ENCODE measurements at regions of chr6 and their contacts with region 1.

Region 1: DNA sequence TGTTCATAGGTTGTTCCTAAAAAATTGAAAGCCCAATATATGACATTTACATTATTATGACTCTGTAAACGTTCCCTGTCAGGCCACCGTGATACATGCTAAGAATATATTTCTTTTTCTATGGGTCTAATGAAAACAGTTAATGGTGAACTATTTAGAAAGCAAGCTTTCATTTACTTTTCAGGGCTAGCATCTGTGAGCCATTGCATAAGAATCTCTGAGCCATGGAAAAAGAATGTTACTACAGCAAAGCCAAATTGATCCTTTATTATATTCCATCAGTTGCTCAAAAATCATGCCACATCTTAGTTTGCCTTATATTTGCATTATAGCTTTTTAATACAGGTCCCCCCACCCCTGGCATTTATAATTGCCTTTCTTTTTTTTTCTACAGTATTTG is 275.5 kb downstream of the ZFAND3 start:
- DNase-seq: peak in 1 of 2 experiments; percentile 44
- H3K4me3 ChIP-seq: no peak overlapping the region
- H3K27ac ChIP-seq: 0 out of 2 replicates have a peak overlapping the region, but pooled peaks have one; percentile 2
- H3K4me1 ChIP-seq: no peaks in the 10 kb centered on the region
- H3K27me3 ChIP-seq: no peaks in the 10 kb centered on the region
- CTCF ChIP-seq: no peak

Region 2: DNA sequence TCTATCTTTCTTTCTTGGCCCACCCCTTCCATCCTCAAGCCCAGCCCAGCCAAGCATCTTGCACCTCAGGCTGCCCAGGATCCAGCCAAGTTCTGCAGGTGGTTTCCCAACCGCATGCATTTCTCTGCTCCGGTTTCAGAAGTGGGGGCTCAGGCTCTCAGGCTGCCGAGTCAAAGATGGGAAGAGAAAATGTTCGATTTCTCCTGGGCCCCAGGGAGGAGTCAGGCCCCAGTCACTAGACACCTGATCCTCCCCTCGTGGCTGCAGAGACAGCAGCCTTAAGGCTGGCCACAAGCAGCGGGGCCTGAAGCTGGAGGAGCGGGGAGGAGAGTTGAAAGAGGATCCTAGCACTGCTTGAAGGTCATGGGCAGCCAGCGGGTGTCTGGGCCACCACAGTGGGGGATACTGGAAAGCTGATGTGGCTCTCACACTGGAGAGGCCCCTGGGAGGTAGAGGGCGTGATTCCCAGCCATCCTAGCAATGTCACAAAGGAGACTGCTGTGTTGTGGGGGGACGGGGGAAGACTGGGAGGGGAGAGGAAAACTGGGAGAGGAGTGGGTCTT is 317.7 kb before region 1 on chr6:
- CTCF ChIA-PET with region 1: no interaction called
- POLR2A ChIA-PET with region 1: no interaction called
- intact Hi-C with region 1: no loop called
- DNase-seq: no peak
- H3K4me3 ChIP-seq: no peak overlapping the region
- H3K27ac ChIP-seq: no peak overlapping the region
- H3K4me1 ChIP-seq: no peaks in the 10 kb centered on the region
- H3K27me3 ChIP-seq: no peaks in the 10 kb centered on the region
- CTCF ChIP-seq: no peak

Region 3: GRCh38 chr6:37913210-37913609 is 181.8 kb before region 1 on chr6:
- CTCF ChIA-PET with region 1: no interaction called
- POLR2A ChIA-PET with region 1: interaction called, 20 read pairs
- intact Hi-C with region 1: no loop called
- DNase-seq: no peak
- H3K4me3 ChIP-seq: no peak overlapping the region
- H3K27ac ChIP-seq: no peak overlapping the region
- H3K4me1 ChIP-seq: no peaks in the 10 kb centered on the region
- H3K27me3 ChIP-seq: no peaks in the 10 kb centered on the region
- CTCF ChIP-seq: no peak

Region 4: GRCh38 chr6:38155144-38155543 is 60.1 kb after region 1 on chr6:
- CTCF ChIA-PET with region 1: no interaction called
- POLR2A ChIA-PET with region 1: no interaction called
- intact Hi-C with region 1: no loop called
- DNase-seq: no peak
- H3K4me3 ChIP-seq: no peak overlapping the region
- H3K27ac ChIP-seq: peak overlapping the region; percentile 1; the same call in 1 of the 2 replicates
- H3K4me1 ChIP-seq: no peaks in the 10 kb centered on the region
- H3K27me3 ChIP-seq: no peaks in the 10 kb centered on the region
- CTCF ChIP-seq: no peak

Region 5: GRCh38 chr6:38239719-38240451 is 144.8 kb after region 1 on chr6:
- CTCF ChIA-PET with region 1: no interaction called
- POLR2A ChIA-PET with region 1: no interaction called
- intact Hi-C with region 1: no loop called
- DNase-seq: peak in 1 of 2 experiments; percentile 36
- H3K4me3 ChIP-seq: no peak overlapping the region
- H3K27ac ChIP-seq: no peak overlapping the region
- H3K4me1 ChIP-seq: peaks cover 14% of the 10 kb centered on the region
- H3K27me3 ChIP-seq: no peaks in the 10 kb centered on the region
- CTCF ChIP-seq: no peak

Region 6: GRCh38 chr6:38271081-38271752 is 176.2 kb after region 1 on chr6:
- CTCF ChIA-PET with region 1: no interaction called
- POLR2A ChIA-PET with region 1: no interaction called
- intact Hi-C with region 1: no loop called
- DNase-seq: no peak
- H3K4me3 ChIP-seq: no peak overlapping the region
- H3K27ac ChIP-seq: peak overlapping the region; percentile 3; the same call in 1 of the 2 replicates
- H3K4me1 ChIP-seq: peaks cover 25% of the 10 kb centered on the region
- H3K27me3 ChIP-seq: no peaks in the 10 kb centered on the region
- CTCF ChIP-seq: no peak

Measured in PC-9 (cell line).